Naive thymus-derived CD4-positive, alpha-beta T cell (primary cell): ENCODE measurements at regions of chr19 and their contacts with region 1.

Region 1: GRCh38 chr19:2561895-2562294 is 86.0 kb downstream of the GADD45B start:
- DNase-seq: peak; percentile 38 to 78 (median 71)
- ATAC-seq: peak; percentile 93
- H3K4me3 ChIP-seq: peak overlapping the region; percentile 70
- H3K4me3 Mint-ChIP-seq: peak overlapping the region; percentile 83 to 96 (median 92)
- H3K27ac ChIP-seq: peak overlapping the region; percentile 78
- H3K27ac Mint-ChIP-seq: peak overlapping the region; percentile 92 to 99 (median 98)
- H3K4me1 ChIP-seq: peaks cover 8 to 11% of the 10 kb centered on the region in 2 donors
- H3K4me1 Mint-ChIP-seq: peaks cover 12 to 56% (median 20%) of the 10 kb centered on the region in 7 donors
- H3K27me3 ChIP-seq: no peaks in the 10 kb centered on the region
- H3K27me3 Mint-ChIP-seq: no peaks in the 10 kb centered on the region

Region 2: GRCh38 chr19:2507109-2507508 is 54.8 kb before region 1 on chr19:
- CTCF ChIA-PET with region 1: no interaction called
- POLR2A ChIA-PET with region 1: interaction called, 17 read pairs
- intact Hi-C with region 1: loop called in 1 of 2 experiments (anchors 5 kb)
- DNase-seq: peak in 7 of 9 donors; percentile 41 to 70 (median 62)
- ATAC-seq: peak; percentile 72
- H3K4me3 ChIP-seq: no peak overlapping the region
- H3K4me3 Mint-ChIP-seq: peak overlapping the region; percentile 25 to 77 (median 68)
- H3K27ac ChIP-seq: no peak overlapping the region
- H3K27ac Mint-ChIP-seq: peak overlapping the region in 7 of 9 donors; percentile 74 to 92 (median 86)
- H3K4me1 ChIP-seq: peaks cover 11 to 15% of the 10 kb centered on the region in 2 donors
- H3K4me1 Mint-ChIP-seq: peaks cover 6 to 30% (median 21%) of the 10 kb centered on the region in 7 donors
- H3K27me3 ChIP-seq: no peaks in the 10 kb centered on the region
- H3K27me3 Mint-ChIP-seq: peaks cover 0 to 7% (median 0%) of the 10 kb centered on the region in 5 donors

Region 3: DNA sequence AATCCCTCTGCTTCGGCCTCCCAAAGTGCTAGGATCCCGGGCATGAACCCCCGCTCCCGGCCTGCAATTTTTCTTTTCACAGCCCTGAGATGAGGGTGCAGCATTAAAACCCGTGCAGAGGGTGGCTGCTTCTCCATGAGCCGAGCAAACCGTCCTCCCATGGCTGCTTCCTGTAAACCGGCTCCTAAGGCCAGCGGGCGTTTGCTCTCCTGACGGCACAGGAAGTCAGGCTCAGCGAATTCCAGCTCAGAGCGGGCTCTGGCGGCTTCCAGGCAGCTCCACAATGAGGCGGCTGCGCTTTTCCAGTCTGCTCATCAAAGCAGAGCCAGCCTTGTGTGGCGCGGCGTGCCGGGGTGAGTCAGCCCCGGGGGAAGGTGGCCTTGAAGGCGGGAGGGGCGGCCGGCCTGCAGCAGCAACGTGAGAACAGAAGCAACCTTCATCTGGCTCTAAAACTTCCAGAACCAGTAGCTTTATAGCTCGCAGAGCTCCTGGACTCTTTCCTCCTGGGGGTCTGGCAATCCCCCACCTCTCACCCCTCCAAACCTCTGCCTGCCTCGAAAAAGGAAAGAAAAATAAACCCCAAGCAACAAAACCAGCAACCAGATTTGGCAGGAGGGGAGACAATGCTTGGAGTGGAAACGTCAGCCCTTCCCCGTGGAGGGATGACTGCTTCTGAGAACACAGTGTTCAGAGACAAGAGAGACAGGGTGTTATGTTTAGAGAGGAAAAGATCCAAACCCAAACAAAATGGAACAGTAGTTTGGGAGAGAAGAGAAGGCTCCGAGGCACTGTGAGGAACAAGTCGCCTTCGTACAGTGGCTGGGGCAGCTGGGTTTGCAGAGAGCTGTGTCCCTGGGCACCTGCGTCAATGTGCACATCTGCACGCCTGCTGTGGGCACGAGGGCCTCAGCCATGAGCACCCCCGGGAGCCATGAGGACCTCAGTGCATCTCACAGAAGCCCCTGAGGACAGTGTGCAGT is 18.1 kb before region 1 on chr19:
- CTCF ChIA-PET with region 1: interaction called, 4 read pairs
- POLR2A ChIA-PET with region 1: interaction called, 11 read pairs
- intact Hi-C with region 1: no loop called
- DNase-seq: peak in 8 of 9 donors; percentile 16 to 69 (median 36)
- ATAC-seq: peak; percentile 80
- H3K4me3 ChIP-seq: peak overlapping the region; percentile 38
- H3K4me3 Mint-ChIP-seq: peak overlapping the region; percentile 55 to 83 (median 74)
- H3K27ac ChIP-seq: no peak overlapping the region
- H3K27ac Mint-ChIP-seq: peak overlapping the region in 8 of 9 donors; percentile 42 to 88 (median 68)
- H3K4me1 ChIP-seq: peaks cover 4 to 6% of the 10 kb centered on the region in 2 donors
- H3K4me1 Mint-ChIP-seq: peaks cover 10 to 28% (median 15%) of the 10 kb centered on the region in 7 donors
- H3K27me3 ChIP-seq: no peaks in the 10 kb centered on the region
- H3K27me3 Mint-ChIP-seq: no peaks in the 10 kb centered on the region

Region 4: DNA sequence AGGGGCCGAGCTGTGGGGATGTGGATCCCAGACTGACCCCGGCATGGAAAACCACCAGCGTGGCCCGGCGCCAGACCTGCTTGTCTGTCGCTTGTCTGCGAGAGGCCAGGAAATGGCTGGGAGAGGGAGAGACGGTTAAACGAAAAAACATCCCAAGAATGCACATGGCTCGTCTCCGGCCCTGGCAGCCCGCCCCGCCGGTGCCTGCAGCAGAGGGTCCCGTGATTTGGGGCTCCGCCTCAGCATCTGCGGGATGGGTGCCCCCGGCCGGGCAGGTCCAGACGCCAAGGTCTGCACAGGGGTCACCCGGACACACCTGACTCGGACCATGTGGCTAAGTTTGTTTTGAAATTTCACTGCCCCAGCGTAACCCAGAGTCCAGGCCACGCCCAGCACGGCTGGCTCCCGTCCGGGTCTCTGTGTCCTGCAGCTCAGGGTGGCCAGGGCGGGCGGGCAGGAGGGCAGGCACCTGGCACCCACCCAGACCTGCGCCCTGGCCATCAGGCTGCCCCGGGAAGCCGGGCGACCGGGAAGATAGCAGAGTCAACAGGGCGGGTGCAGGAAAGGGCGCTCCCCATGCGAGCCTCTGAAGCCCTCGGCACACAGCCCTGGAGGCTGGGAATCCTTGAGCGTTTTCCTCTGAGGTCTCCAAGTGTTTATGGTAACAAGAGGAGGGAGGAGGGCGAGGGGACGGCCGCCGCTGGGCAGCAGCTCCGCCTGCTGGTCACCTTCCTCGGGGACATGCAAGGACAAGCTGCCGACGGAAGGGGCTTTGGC is 17.2 kb after region 1 on chr19:
- CTCF ChIA-PET with region 1: interaction called, 4 read pairs
- POLR2A ChIA-PET with region 1: interaction called, 3 read pairs
- intact Hi-C with region 1: loop called (anchors 1 to 2 kb)
- DNase-seq: peak; percentile 21 to 67 (median 47)
- ATAC-seq: peak; percentile 65
- H3K4me3 ChIP-seq: peak overlapping the region; percentile 33
- H3K4me3 Mint-ChIP-seq: peak overlapping the region in 6 of 10 donors; percentile 51 to 69 (median 62)
- H3K27ac ChIP-seq: no peak overlapping the region
- H3K27ac Mint-ChIP-seq: no peak overlapping the region
- H3K4me1 ChIP-seq: peaks cover 7 to 10% of the 10 kb centered on the region in 2 donors
- H3K4me1 Mint-ChIP-seq: peaks cover 0 to 11% (median 4%) of the 10 kb centered on the region in 7 donors
- H3K27me3 ChIP-seq: no peaks in the 10 kb centered on the region
- H3K27me3 Mint-ChIP-seq: peaks cover 0 to 24% (median 0%) of the 10 kb centered on the region in 5 donors

Region 5: DNA sequence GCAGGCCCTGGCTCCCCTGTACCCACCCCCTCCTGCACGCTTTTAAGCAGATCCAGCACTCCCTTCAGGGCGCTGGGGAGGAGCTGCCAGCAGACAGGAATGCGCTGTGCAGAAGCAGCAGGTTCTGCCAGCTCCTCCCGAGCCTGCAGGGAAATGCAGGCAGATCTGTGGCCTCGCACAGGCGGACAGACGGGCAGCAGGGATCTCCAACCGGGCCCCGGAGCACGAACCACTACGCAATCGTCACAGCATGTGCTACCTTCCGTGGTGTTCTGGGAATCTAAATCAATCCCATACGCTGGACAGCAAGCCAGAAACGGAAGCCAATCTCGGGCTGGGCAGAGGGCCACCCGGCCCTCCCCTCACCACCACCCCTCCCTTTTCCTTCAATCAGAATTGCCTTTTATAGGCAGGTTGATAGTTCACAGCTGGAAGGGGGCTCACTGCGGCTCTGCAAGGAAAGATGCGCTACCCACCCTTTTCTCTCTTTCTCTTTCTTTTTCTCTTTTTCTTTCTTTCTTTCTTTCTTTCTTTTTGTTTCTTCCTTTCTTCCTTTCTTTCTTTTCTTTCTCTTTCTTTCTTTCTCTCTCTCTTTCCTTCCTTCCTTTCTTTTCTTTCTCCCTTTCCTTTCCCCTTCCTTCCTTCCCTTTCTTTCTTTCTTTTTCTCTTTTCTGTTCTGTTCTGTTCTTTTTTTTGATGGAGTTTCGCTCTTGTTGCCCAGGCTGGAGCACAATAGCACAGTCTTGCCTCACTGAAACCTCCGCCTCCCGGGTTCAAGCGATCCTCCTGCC is 40.7 kb after region 1 on chr19:
- CTCF ChIA-PET with region 1: interaction called, 4 read pairs
- POLR2A ChIA-PET with region 1: interaction called, 12 read pairs
- intact Hi-C with region 1: loop called (anchors 1 to 2 kb)
- DNase-seq: peak in 1 of 9 donors; percentile 19
- ATAC-seq: no peak
- H3K4me3 ChIP-seq: no peak overlapping the region
- H3K4me3 Mint-ChIP-seq: no peak overlapping the region
- H3K27ac ChIP-seq: no peak overlapping the region
- H3K27ac Mint-ChIP-seq: peak overlapping the region in 2 of 9 donors; percentile 33 to 74
- H3K4me1 ChIP-seq: peaks cover under 1 to 2% of the 10 kb centered on the region in 2 donors
- H3K4me1 Mint-ChIP-seq: peaks cover 7 to 17% (median 12%) of the 10 kb centered on the region in 7 donors
- H3K27me3 ChIP-seq: no peaks in the 10 kb centered on the region
- H3K27me3 Mint-ChIP-seq: peaks cover 0 to 8% (median 0%) of the 10 kb centered on the region in 5 donors

Region 6: GRCh38 chr19:2750808-2751443 is 189.0 kb after region 1 on chr19:
- CTCF ChIA-PET with region 1: no interaction called
- POLR2A ChIA-PET with region 1: no interaction called
- intact Hi-C with region 1: no loop called
- DNase-seq: no peak
- ATAC-seq: no peak
- H3K4me3 ChIP-seq: no peak overlapping the region
- H3K4me3 Mint-ChIP-seq: no peak overlapping the region
- H3K27ac ChIP-seq: no peak overlapping the region
- H3K27ac Mint-ChIP-seq: no peak overlapping the region
- H3K4me1 ChIP-seq: peaks cover 0 to 3% of the 10 kb centered on the region in 2 donors
- H3K4me1 Mint-ChIP-seq: no peaks in the 10 kb centered on the region
- H3K27me3 ChIP-seq: no peaks in the 10 kb centered on the region
- H3K27me3 Mint-ChIP-seq: peaks cover 0 to 2% (median 0%) of the 10 kb centered on the region in 5 donors

Region 7: GRCh38 chr19:3289971-3290569 is 728.2 kb after region 1 on chr19:
- CTCF ChIA-PET with region 1: no interaction called
- POLR2A ChIA-PET with region 1: no interaction called
- intact Hi-C with region 1: no loop called
- DNase-seq: no peak
- ATAC-seq: no peak
- H3K4me3 ChIP-seq: no peak overlapping the region
- H3K4me3 Mint-ChIP-seq: no peak overlapping the region
- H3K27ac ChIP-seq: no peak overlapping the region
- H3K27ac Mint-ChIP-seq: no peak overlapping the region
- H3K4me1 ChIP-seq: peaks cover 3% of the 10 kb centered on the region in 2 donors
- H3K4me1 Mint-ChIP-seq: peaks cover 0 to 7% (median 2%) of the 10 kb centered on the region in 7 donors
- H3K27me3 ChIP-seq: no peaks in the 10 kb centered on the region
- H3K27me3 Mint-ChIP-seq: peaks cover 0 to 14% (median 5%) of the 10 kb centered on the region in 5 donors

Region 8: DNA sequence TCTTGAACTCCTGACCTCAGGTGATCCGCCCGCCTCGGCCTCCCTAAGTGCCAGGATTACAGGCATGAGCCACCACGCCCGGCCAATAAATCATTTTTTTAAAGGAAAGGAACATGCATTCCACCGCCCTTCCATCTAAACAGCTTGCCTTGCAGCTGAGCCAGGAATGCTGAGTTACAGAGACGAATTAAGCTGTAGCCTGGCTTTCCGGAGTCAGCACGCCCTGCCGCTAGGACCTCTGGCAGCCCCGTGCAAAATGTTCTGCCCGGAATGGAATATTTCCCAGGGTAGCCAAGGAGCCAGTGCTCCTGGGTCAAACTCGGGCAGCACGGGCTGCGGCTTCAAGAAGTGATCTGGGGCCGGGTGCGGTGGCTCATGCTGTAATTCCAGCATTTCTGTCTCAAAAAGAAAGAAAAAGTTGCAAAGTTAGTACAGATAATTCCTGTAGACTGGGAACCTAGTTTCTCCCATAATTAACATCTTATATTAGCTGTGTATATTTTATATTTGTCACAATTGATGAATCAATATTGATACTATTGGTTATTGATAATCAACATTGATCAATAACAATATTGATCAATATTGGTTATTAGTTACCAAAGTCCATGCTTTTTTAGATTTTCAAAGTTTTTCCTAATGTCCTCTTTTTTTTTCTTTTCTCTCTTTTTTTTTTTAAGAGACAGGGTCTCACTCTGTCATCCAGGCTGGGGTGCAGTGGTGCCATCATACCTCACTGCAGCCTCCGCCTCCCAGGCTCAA is 1337.8 kb after region 1 on chr19:
- CTCF ChIA-PET with region 1: no interaction called
- POLR2A ChIA-PET with region 1: no interaction called
- intact Hi-C with region 1: no loop called
- DNase-seq: no peak
- ATAC-seq: no peak
- H3K4me3 ChIP-seq: no peak overlapping the region
- H3K4me3 Mint-ChIP-seq: no peak overlapping the region
- H3K27ac ChIP-seq: no peak overlapping the region
- H3K27ac Mint-ChIP-seq: no peak overlapping the region
- H3K4me1 ChIP-seq: no peaks in the 10 kb centered on the region
- H3K4me1 Mint-ChIP-seq: peaks cover 0 to 8% (median 5%) of the 10 kb centered on the region in 7 donors
- H3K27me3 ChIP-seq: no peaks in the 10 kb centered on the region
- H3K27me3 Mint-ChIP-seq: no peaks in the 10 kb centered on the region